Adrenal gland (tissue), 19 donors: ENCODE measurements at regions of chr15 and their contacts with region 1.

Region 1: GRCh38 chr15:29511663-29512062 is 242.0 kb upstream of the NSMCE3 start:
- DNase-seq: no peak
- H3K4me3 ChIP-seq: no peak overlapping the region
- H3K27ac ChIP-seq: no peak overlapping the region
- H3K4me1 ChIP-seq: no peaks in the 10 kb centered on the region
- H3K27me3 ChIP-seq: no peaks in the 10 kb centered on the region
- CTCF ChIP-seq: no peak
- POLR2A ChIP-seq: no peak

Region 2: GRCh38 chr15:29568838-29569532 is 57.3 kb after region 1 on chr15:
- intact Hi-C with region 1: loop called in 1 of 2 experiments (anchors 10 kb)
- DNase-seq: peak in 1 of 7 donors; percentile 61
- H3K4me3 ChIP-seq: no peak overlapping the region
- H3K27ac ChIP-seq: no peak overlapping the region
- H3K4me1 ChIP-seq: no peaks in the 10 kb centered on the region
- H3K27me3 ChIP-seq: peaks cover 27% of the 10 kb centered on the region
- CTCF ChIP-seq: no peak
- POLR2A ChIP-seq: no peak

Region 3: DNA sequence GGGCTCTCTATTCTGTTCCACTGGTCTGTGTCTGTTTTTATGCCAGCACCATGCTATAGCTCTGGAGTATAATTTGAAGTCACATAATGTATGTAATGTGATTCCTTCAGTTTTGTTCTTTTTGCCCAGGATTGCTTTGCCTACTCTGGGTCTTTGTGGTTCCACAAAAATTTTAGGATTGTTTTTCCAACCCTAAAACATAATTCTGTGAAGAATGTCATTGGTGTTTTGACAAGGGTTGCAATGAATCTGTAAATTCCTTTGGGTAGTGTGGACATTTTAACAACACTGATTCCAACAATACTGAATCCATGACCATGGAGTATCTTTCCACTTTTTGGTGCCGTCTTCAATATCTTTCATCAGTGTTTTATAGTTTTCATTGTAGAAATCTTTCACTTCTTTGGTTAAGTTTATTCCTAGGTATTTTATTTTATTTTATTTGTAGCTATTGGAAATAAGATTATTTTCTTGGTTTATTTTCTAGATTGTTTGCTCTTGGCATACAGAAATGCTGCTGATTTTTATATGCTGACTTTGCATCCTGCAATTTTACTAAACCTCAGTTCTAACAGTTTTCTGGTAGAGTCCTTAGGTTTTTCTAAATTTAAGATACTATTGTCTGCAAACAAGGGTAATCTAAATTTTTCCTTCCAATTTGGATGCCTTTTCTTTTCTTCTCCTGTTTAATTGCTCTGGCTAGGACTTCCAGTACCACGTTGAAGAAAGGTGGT is 280.9 kb after region 1 on chr15:
- intact Hi-C with region 1: no loop called
- DNase-seq: no peak
- H3K4me3 ChIP-seq: no peak overlapping the region
- H3K27ac ChIP-seq: no peak overlapping the region
- H3K4me1 ChIP-seq: peaks cover 0 to 5% of the 10 kb centered on the region in 2 donors
- H3K27me3 ChIP-seq: no peaks in the 10 kb centered on the region
- CTCF ChIP-seq: no peak
- POLR2A ChIP-seq: no peak